Activated CD4-positive, alpha-beta memory T cell treated with anti-CD3 and anti-CD28 coated beads, Interleukin-2, amount 10 ng/mL, durations not matched to agents 7 days and 5 days (primary cell): ENCODE measurements at regions of chr2 and their contacts with region 1.

Region 1: GRCh38 chr2:72924353-72925240 is 7.3 kb downstream of the EMX1 start:
- DNase-seq: no peak
- H3K4me3 Mint-ChIP-seq: no peak overlapping the region
- H3K27ac Mint-ChIP-seq: no peak overlapping the region
- H3K4me1 Mint-ChIP-seq: peaks cover 11% of the 10 kb centered on the region
- H3K27me3 Mint-ChIP-seq: peaks cover 54% of the 10 kb centered on the region

Region 2: DNA sequence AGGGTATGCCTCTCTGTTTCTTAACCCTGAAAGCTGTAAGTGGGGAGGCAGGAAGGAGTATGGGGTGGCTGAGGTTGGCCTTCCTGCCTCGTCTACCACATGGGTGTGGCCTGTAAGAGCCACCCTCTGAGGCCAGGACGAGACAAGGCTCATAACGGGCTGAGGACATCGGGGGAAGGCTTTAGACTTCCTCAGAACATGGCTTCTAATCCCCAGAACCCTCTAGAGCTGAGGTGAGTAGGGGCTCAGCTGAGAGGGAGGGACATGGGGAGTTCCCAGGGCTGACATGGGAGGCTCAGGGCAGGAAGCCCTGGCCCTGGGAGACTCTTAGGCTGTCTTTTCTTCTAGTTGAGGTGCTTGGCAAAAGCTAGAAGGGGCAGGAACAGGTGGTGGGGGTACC is 29.4 kb after region 1 on chr2:
- CTCF ChIA-PET with region 1: no interaction called
- POLR2A ChIA-PET with region 1: interaction called, 15 read pairs
- DNase-seq: peak; percentile 81
- H3K4me3 Mint-ChIP-seq: peak overlapping the region; percentile 87
- H3K27ac Mint-ChIP-seq: peak overlapping the region; percentile 88
- H3K4me1 Mint-ChIP-seq: peaks cover 44% of the 10 kb centered on the region
- H3K27me3 Mint-ChIP-seq: no peaks in the 10 kb centered on the region